ENCODE measurements at regions of chr11 and their contacts with region 1.

Region 1: DNA sequence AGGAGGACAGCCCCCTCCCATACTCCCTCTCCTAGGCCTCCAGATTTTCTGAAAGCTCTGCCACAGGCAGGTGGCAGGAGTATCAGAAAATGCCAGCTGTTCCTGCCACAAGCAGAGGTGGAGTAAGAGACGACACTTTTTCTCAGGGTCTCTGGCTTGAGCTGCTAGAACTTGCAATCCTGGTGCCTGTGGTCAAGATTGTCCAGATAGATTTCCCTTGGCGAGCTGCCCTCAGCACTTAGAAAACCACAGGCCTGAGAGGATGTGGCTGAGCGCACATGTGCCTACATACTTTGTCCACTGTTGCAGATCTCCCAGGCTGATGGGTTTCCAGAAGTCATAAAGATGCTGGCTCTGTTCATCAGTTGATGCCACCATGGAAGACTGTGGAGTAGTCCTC is 65.7 kb upstream of the NAV2 start:
- DNase-seq: peak; percentile 46
- H3K4me3 ChIP-seq: no peak overlapping the region
- H3K27ac ChIP-seq: peak overlapping the region; percentile 65 to 85
- H3K4me1 ChIP-seq: peaks cover 12 to 49% of the 10 kb centered on the region in 2 experiments; a peak in 3 of 4 replicates
- H3K27me3 ChIP-seq: no peaks in the 10 kb centered on the region
- CTCF ChIP-seq: peak; percentile 37
- EP300 ChIP-seq: peak; percentile 76 to 97
- RAD21 ChIP-seq: no peak

Region 2: GRCh38 chr11:19566583-19567379 is 80.1 kb before region 1 on chr11:
- CTCF ChIA-PET with region 1: interaction called, 13 read pairs
- POLR2A ChIA-PET with region 1: no interaction called
- DNase-seq: no peak
- H3K4me3 ChIP-seq: no peak overlapping the region
- H3K27ac ChIP-seq: no peak overlapping the region
- H3K4me1 ChIP-seq: peaks cover 0 to 33% of the 10 kb centered on the region in 2 experiments; a peak in 2 of 4 replicates
- H3K27me3 ChIP-seq: no peaks in the 10 kb centered on the region
- CTCF ChIP-seq: no peak
- EP300 ChIP-seq: no peak
- RAD21 ChIP-seq: no peak

Region 3: GRCh38 chr11:19633276-19633675 is 13.6 kb before region 1 on chr11:
- CTCF ChIA-PET with region 1: interaction called, 13 read pairs
- POLR2A ChIA-PET with region 1: no interaction called
- DNase-seq: no peak
- H3K4me3 ChIP-seq: no peak overlapping the region
- H3K27ac ChIP-seq: peak overlapping the region; percentile 61 to 92; a peak in 3 of 4 replicates
- H3K4me1 ChIP-seq: peaks cover 22 to 25% of the 10 kb centered on the region in 2 experiments
- H3K27me3 ChIP-seq: no peaks in the 10 kb centered on the region
- CTCF ChIP-seq: no peak
- EP300 ChIP-seq: no peak
- RAD21 ChIP-seq: no peak

Region 4: GRCh38 chr11:19660076-19660475 is 13.2 kb after region 1 on chr11:
- CTCF ChIA-PET with region 1: interaction called, 14 read pairs
- POLR2A ChIA-PET with region 1: no interaction called
- DNase-seq: no peak
- H3K4me3 ChIP-seq: no peak overlapping the region
- H3K27ac ChIP-seq: peak overlapping the region; percentile 61 to 67
- H3K4me1 ChIP-seq: peaks cover 0 to 33% of the 10 kb centered on the region in 2 experiments; a peak in 1 of 4 replicates
- H3K27me3 ChIP-seq: no peaks in the 10 kb centered on the region
- CTCF ChIP-seq: no peak
- EP300 ChIP-seq: peak in 1 of 2 experiments; percentile 78; a peak in 1 of 4 replicates
- RAD21 ChIP-seq: no peak

Measured in SK-N-SH (cell line).